Caco-2 (cell line): ENCODE measurements at regions of chr10 and their contacts with region 1.

Region 1: GRCh38 chr10:17872191-17873091 is 63.3 kb downstream of the MRC1 start:
- DNase-seq: peak in 1 of 2 experiments; percentile 17
- H3K4me3 ChIP-seq: no peak overlapping the region
- H3K4me3 Mint-ChIP-seq: no peak overlapping the region
- H3K27ac Mint-ChIP-seq: no peak overlapping the region
- H3K4me1 ChIP-seq: no peaks in the 10 kb centered on the region
- H3K4me1 Mint-ChIP-seq: no peaks in the 10 kb centered on the region
- H3K27me3 ChIP-seq: no peaks in the 10 kb centered on the region
- H3K27me3 Mint-ChIP-seq: peaks cover 6% of the 10 kb centered on the region
- CTCF ChIP-seq: peak; percentile 41 to 60

Region 2: GRCh38 chr10:17607603-17608332 is 264.7 kb before region 1 on chr10:
- CTCF ChIA-PET with region 1: no interaction called
- POLR2A ChIA-PET with region 1: no interaction called
- intact Hi-C with region 1: loop called (anchors 1 kb)
- DNase-seq: peak in 1 of 2 experiments; percentile 65
- H3K4me3 ChIP-seq: no peak overlapping the region
- H3K4me3 Mint-ChIP-seq: no peak overlapping the region
- H3K27ac Mint-ChIP-seq: no peak overlapping the region
- H3K4me1 ChIP-seq: no peaks in the 10 kb centered on the region
- H3K4me1 Mint-ChIP-seq: peaks cover 7% of the 10 kb centered on the region
- H3K27me3 ChIP-seq: no peaks in the 10 kb centered on the region
- H3K27me3 Mint-ChIP-seq: no peaks in the 10 kb centered on the region
- CTCF ChIP-seq: peak; percentile 88 to 89

Region 3: GRCh38 chr10:17737027-17737965 is 135.1 kb before region 1 on chr10:
- CTCF ChIA-PET with region 1: no interaction called
- POLR2A ChIA-PET with region 1: no interaction called
- intact Hi-C with region 1: loop called (anchors 1 kb)
- DNase-seq: peak in 1 of 2 experiments; percentile 37
- H3K4me3 ChIP-seq: no peak overlapping the region
- H3K4me3 Mint-ChIP-seq: no peak overlapping the region
- H3K27ac Mint-ChIP-seq: no peak overlapping the region
- H3K4me1 ChIP-seq: no peaks in the 10 kb centered on the region
- H3K4me1 Mint-ChIP-seq: peaks cover 5% of the 10 kb centered on the region
- H3K27me3 ChIP-seq: no peaks in the 10 kb centered on the region
- H3K27me3 Mint-ChIP-seq: no peaks in the 10 kb centered on the region
- CTCF ChIP-seq: peak; percentile 64 to 78

Region 4: DNA sequence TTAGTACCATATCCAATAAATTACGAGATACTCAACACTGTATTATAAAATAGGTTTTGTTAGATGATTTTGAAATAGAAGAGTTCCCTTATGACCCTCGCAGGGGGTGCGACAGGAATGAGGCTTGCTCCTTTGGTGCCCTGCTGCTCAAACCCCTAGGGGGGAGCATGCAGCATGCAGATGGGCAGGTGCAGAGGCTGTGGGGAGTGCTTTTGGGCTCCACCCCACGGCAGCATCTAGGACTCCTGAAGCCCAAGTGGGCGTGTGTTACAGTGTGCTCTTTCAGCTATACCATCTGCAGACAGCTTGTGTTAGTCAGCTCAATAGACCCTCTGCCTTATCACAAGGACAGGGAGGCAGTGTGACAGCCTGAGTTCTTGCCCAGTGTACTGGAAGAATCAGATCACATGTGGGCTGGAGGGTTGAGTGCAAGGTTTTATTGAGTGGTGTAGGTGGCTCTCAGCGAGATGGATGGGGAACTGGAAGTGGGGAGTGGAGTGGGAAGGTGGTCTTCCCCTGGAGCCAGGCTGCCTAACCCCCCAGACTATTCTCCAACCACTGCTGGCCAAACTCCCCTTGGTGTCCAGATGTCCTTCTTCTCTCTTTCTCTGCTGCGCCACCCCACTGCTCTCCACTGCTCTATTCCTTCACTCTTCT is 66.4 kb before region 1 on chr10:
- CTCF ChIA-PET with region 1: no interaction called
- POLR2A ChIA-PET with region 1: no interaction called
- intact Hi-C with region 1: loop called (anchors 1 kb)
- DNase-seq: peak; percentile 54 to 56
- H3K4me3 ChIP-seq: no peak overlapping the region
- H3K4me3 Mint-ChIP-seq: no peak overlapping the region
- H3K27ac Mint-ChIP-seq: no peak overlapping the region
- H3K4me1 ChIP-seq: no peaks in the 10 kb centered on the region
- H3K4me1 Mint-ChIP-seq: peaks cover 10% of the 10 kb centered on the region
- H3K27me3 ChIP-seq: no peaks in the 10 kb centered on the region
- H3K27me3 Mint-ChIP-seq: no peaks in the 10 kb centered on the region
- CTCF ChIP-seq: peak; percentile 28 to 52

Region 5: GRCh38 chr10:17821893-17822292 is 50.5 kb before region 1 on chr10:
- CTCF ChIA-PET with region 1: no interaction called
- POLR2A ChIA-PET with region 1: no interaction called
- intact Hi-C with region 1: loop called (anchors 2 kb)
- DNase-seq: no peak
- H3K4me3 ChIP-seq: no peak overlapping the region
- H3K4me3 Mint-ChIP-seq: no peak overlapping the region
- H3K27ac Mint-ChIP-seq: no peak overlapping the region
- H3K4me1 ChIP-seq: no peaks in the 10 kb centered on the region
- H3K4me1 Mint-ChIP-seq: no peaks in the 10 kb centered on the region
- H3K27me3 ChIP-seq: peaks cover 2% of the 10 kb centered on the region; the same call in 1 of the 2 replicates
- H3K27me3 Mint-ChIP-seq: peaks cover 17% of the 10 kb centered on the region
- CTCF ChIP-seq: no peak